WTC11 (cell line): ENCODE measurements at regions of chrX and their contacts with region 1.

Region 1: GRCh38 chrX:108165383-108166111 is 74.0 kb downstream of the ATG4A start:
- DNase-seq: peak; percentile 19
- ATAC-seq: peak; percentile 96
- H3K4me3 Mint-ChIP-seq: no peak overlapping the region
- H3K27ac Mint-ChIP-seq: no peak overlapping the region
- H3K4me1 Mint-ChIP-seq: no peaks in the 10 kb centered on the region
- H3K27me3 Mint-ChIP-seq: no peaks in the 10 kb centered on the region
- CTCF ChIP-seq: no peak

Region 2: GRCh38 chrX:108177351-108178142 is 12.0 kb after region 1 on chrX:
- CTCF ChIA-PET with region 1: interaction called, 11 read pairs
- POLR2A ChIA-PET with region 1: no interaction called
- DNase-seq: no peak
- ATAC-seq: peak; percentile 73
- H3K4me3 Mint-ChIP-seq: no peak overlapping the region
- H3K27ac Mint-ChIP-seq: no peak overlapping the region
- H3K4me1 Mint-ChIP-seq: peaks cover 22% of the 10 kb centered on the region
- H3K27me3 Mint-ChIP-seq: no peaks in the 10 kb centered on the region; the same call in 1 of the 2 replicates
- CTCF ChIP-seq: no peak

Region 3: GRCh38 chrX:108304210-108304609 is 138.7 kb after region 1 on chrX:
- CTCF ChIA-PET with region 1: interaction called, 13 read pairs
- POLR2A ChIA-PET with region 1: no interaction called
- DNase-seq: no peak
- ATAC-seq: peak; percentile 67
- H3K4me3 Mint-ChIP-seq: no peak overlapping the region
- H3K27ac Mint-ChIP-seq: no peak overlapping the region
- H3K4me1 Mint-ChIP-seq: peaks cover 7% of the 10 kb centered on the region
- H3K27me3 Mint-ChIP-seq: no peaks in the 10 kb centered on the region
- CTCF ChIP-seq: no peak